ENCODE measurements at regions of chr14 and their contacts with region 1.

Region 1: GRCh38 chr14:23052182-23052623 is 5.1 kb downstream of the CDH24 start:
- DNase-seq: peak; percentile 68
- ATAC-seq: peak; percentile 55
- H3K4me3 Mint-ChIP-seq: no peak overlapping the region
- H3K27ac Mint-ChIP-seq: no peak overlapping the region
- H3K4me1 Mint-ChIP-seq: peaks cover 15% of the 10 kb centered on the region
- H3K27me3 Mint-ChIP-seq: peaks cover 5% of the 10 kb centered on the region; the same call in 1 of the 2 replicates
- CTCF ChIP-seq: no peak

Region 2: GRCh38 chr14:22973217-22974032 is 78.8 kb before region 1 on chr14:
- CTCF ChIA-PET with region 1: interaction called, 16 read pairs
- POLR2A ChIA-PET with region 1: interaction called, 4 read pairs
- DNase-seq: peak; percentile 50
- ATAC-seq: peak; percentile 16
- H3K4me3 Mint-ChIP-seq: no peak overlapping the region
- H3K27ac Mint-ChIP-seq: peak overlapping the region; percentile 17
- H3K4me1 Mint-ChIP-seq: peaks cover 27% of the 10 kb centered on the region
- H3K27me3 Mint-ChIP-seq: no peaks in the 10 kb centered on the region
- CTCF ChIP-seq: peak; percentile 51

Region 3: GRCh38 chr14:23041729-23042128 is 10.5 kb before region 1 on chr14:
- CTCF ChIA-PET with region 1: interaction called, 44 read pairs
- POLR2A ChIA-PET with region 1: no interaction called
- DNase-seq: no peak
- ATAC-seq: no peak
- H3K4me3 Mint-ChIP-seq: no peak overlapping the region
- H3K27ac Mint-ChIP-seq: no peak overlapping the region
- H3K4me1 Mint-ChIP-seq: peaks cover 5% of the 10 kb centered on the region; the same call in 1 of the 2 replicates
- H3K27me3 Mint-ChIP-seq: no peaks in the 10 kb centered on the region
- CTCF ChIP-seq: no peak

Region 4: DNA sequence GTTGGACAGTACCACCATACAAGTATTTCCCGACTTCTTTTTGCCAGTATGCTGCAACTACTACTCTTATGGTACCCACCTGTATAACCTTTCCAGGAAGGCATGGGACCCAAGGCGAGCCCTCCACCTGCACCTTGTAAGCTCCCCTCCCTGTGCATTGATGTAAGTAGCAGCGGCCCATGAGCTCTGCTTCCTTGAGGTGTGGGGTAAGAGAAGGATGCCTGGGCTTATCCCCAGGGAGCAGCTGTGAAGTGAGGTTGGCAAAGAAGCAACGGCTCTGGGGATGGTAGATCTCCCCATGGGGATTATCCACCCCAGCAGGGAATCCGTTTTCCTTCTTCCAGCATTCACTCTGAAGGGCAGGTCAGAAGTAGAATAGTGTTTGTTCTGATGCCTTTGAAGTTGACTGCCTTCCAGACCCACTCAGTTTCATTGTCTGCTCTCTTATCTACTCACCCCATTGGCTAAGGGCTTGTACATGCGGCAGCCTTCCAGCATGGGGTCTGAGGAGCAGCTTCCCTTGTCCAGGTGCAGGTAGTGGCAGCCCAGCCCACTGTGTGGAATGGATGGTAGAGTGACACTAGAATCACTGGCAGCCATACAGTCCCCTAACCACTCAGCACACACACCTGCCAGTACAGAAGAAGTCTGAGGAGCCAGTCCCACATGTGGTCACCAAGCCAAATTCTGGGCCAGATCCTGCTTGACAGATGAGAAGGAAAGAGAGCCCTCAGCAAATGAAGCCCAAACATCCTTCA is 49.2 kb after region 1 on chr14:
- CTCF ChIA-PET with region 1: no interaction called
- POLR2A ChIA-PET with region 1: no interaction called
- DNase-seq: no peak
- ATAC-seq: no peak
- H3K4me3 Mint-ChIP-seq: no peak overlapping the region
- H3K27ac Mint-ChIP-seq: no peak overlapping the region
- H3K4me1 Mint-ChIP-seq: peaks cover 60% of the 10 kb centered on the region
- H3K27me3 Mint-ChIP-seq: peaks cover 15% of the 10 kb centered on the region
- CTCF ChIP-seq: no peak

Measured in WTC11 (cell line).